Activated B cell treated with CpG ODN at 0.5 μM for 24 hours (primary cell): ENCODE measurements at regions of chr10 and their contacts with region 1.

Region 1: DNA sequence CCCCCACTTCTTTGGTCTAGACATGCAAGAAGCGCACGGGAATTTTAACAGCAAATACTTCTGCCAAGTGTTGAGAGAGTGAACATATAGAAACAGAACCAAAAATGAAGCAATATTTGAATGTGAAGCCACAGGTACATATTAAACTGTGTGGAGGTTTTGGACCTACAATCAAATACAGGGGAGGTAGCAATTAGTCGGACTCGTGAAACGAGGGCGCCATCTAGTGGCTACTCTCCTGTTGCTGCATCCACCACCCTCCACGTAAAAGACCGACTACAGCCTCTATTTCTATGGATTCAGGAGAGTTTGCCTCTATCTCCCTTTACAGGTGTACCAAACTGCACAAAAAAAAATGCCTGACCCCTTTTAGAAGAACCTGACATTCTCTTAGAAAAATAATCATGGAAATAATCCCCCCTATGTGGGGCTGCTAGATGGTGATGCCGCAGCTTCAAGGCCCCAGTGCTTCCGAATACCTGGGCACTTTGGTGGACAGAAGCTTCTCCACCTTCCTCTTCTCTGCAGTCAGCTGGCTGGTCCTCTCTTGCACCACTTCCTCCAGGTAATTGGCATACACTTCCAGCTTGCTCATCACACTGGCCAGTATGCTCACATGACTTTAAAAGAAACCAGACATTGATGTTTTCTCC is 31.7 kb downstream of the TECTB start:
- DNase-seq: peak; percentile 34
- ATAC-seq: peak; percentile 62
- H3K4me3 Mint-ChIP-seq: no peak overlapping the region
- H3K27ac Mint-ChIP-seq: no peak overlapping the region
- H3K4me1 Mint-ChIP-seq: no peaks in the 10 kb centered on the region
- H3K27me3 Mint-ChIP-seq: peaks cover 12% of the 10 kb centered on the region
- CTCF ChIP-seq: peak; percentile 31

Region 2: DNA sequence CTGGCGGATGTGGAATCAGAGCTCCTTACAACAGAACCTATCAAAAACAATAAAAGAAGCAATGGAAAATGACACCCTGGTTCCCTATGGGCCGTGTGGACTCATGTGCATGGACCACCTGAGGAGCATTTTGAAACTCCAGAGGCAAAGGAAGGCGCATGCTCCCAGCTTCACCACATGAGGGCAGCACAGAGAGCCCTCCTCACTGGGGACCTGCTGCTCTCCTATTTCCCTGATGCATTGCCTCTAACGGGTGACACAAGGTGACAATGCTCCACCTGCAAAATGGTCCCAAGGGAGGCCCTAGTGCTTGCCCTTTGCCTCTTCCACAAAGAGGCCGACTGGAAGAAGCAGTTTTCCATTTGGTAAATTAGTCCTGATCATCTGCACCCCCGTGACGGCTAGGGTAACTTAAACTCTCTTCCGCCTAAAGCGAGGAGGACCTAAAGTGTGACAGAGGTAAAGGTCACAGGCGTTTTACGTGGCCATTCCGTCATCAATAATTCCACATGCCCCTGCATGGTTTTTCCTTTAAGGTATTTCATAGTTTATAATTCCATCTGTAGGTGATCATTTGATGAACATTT is 199.1 kb before region 1 on chr10:
- CTCF ChIA-PET with region 1: interaction called, 10 read pairs
- POLR2A ChIA-PET with region 1: no interaction called
- intact Hi-C with region 1: loop called (anchors 1 kb)
- DNase-seq: no peak
- ATAC-seq: peak; percentile 54
- H3K4me3 Mint-ChIP-seq: no peak overlapping the region
- H3K27ac Mint-ChIP-seq: no peak overlapping the region
- H3K4me1 Mint-ChIP-seq: no peaks in the 10 kb centered on the region
- H3K27me3 Mint-ChIP-seq: no peaks in the 10 kb centered on the region
- CTCF ChIP-seq: no peak

Region 3: DNA sequence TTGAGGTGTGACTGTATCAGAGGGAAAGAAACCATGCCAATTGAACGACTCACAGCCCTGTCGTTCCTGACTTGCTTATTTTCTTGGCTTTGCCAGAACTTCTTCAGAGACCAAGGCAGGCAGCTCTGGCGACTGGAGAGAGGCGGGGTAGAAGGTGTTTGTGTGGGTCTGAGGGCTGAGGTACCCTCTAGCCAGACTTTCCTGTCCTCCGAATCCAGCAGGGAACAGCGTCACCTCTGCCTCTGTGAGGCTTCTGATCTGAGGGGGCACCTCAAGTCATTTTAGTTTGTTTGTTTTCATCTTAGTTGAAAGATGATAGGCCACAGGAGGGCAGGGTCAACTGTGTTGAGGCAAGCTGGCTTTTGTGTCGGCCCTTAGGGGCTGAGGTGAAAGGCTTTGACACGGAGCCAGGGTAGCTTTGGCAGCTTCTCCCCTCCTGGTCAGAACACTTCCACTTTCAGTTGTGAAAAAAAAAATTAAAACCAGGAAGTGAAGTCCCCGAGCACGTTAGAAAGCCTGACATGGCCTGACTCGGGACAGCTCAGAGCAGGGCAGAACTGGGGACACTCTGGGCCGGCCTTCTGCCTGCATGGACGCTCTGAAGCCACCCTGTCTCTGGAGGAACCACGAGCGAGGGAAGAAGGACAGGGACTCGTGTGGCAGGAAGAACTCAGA is 60.9 kb after region 1 on chr10:
- CTCF ChIA-PET with region 1: no interaction called
- POLR2A ChIA-PET with region 1: no interaction called
- intact Hi-C with region 1: no loop called
- DNase-seq: peak; percentile 47
- ATAC-seq: peak; percentile 85
- H3K4me3 Mint-ChIP-seq: peak overlapping the region; percentile 100
- H3K27ac Mint-ChIP-seq: peak overlapping the region; percentile 99
- H3K4me1 Mint-ChIP-seq: peaks cover 61% of the 10 kb centered on the region
- H3K27me3 Mint-ChIP-seq: no peaks in the 10 kb centered on the region
- CTCF ChIP-seq: no peak

Region 4: GRCh38 chr10:112434988-112435619 is 120.2 kb after region 1 on chr10:
- CTCF ChIA-PET with region 1: interaction called, 7 read pairs
- POLR2A ChIA-PET with region 1: no interaction called
- intact Hi-C with region 1: loop called (anchors 10 kb)
- DNase-seq: no peak
- ATAC-seq: no peak
- H3K4me3 Mint-ChIP-seq: no peak overlapping the region
- H3K27ac Mint-ChIP-seq: no peak overlapping the region
- H3K4me1 Mint-ChIP-seq: no peaks in the 10 kb centered on the region
- H3K27me3 Mint-ChIP-seq: no peaks in the 10 kb centered on the region
- CTCF ChIP-seq: no peak